Psoas muscle (tissue), 8 donors: ENCODE measurements at regions of chr11 and their contacts with region 1.

Region 1: DNA sequence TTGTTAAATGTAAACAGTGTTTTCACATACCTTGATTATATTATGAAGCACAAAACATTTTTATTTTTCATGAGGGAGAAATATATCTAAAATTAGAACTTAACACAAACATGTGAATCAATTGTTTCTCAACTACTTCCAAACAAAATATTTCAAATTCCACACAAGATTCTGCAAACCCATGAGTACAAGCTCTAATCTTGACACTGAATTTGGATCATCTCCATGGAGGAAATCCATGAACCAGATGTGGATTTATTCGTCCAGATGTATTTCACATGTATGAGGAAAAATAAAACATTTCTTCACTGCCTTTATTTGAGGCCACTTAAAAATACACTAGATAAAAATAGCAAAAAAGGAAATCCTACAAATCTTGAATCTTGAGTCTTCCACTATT is 184.2 kb downstream of the SBF2 start:
- DNase-seq: no peak
- ATAC-seq: peak in 1 of 4 donors; percentile 50
- H3K4me3 ChIP-seq: no peak overlapping the region
- H3K27ac ChIP-seq: peak overlapping the region; percentile 50
- H3K4me1 ChIP-seq: peaks cover 19% of the 10 kb centered on the region
- H3K27me3 ChIP-seq: no peaks in the 10 kb centered on the region
- CTCF ChIP-seq: no peak

Region 2: DNA sequence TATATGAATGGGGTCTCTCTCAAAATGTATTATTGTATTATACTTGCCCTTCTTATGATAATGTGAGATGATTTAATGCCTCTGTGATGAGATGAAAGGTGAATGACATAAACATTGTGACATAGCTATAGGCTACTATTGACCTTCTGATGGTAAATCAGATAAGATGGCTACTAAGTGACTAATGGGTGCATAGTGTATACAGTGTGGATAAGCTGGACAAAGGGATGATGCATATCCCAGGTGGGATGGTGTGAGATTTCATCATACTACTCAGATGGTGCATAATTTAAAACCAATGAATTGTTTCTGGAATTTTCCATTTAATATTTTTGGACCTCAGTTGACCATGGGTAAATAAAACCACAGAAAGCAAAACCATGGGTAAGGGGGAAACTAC is 59.3 kb before region 1 on chr11:
- intact Hi-C with region 1: loop called in 1 of 2 experiments (anchors 10 kb)
- DNase-seq: no peak
- ATAC-seq: no peak
- H3K4me3 ChIP-seq: no peak overlapping the region
- H3K27ac ChIP-seq: no peak overlapping the region
- H3K4me1 ChIP-seq: no peaks in the 10 kb centered on the region
- H3K27me3 ChIP-seq: no peaks in the 10 kb centered on the region
- CTCF ChIP-seq: no peak

Region 3: DNA sequence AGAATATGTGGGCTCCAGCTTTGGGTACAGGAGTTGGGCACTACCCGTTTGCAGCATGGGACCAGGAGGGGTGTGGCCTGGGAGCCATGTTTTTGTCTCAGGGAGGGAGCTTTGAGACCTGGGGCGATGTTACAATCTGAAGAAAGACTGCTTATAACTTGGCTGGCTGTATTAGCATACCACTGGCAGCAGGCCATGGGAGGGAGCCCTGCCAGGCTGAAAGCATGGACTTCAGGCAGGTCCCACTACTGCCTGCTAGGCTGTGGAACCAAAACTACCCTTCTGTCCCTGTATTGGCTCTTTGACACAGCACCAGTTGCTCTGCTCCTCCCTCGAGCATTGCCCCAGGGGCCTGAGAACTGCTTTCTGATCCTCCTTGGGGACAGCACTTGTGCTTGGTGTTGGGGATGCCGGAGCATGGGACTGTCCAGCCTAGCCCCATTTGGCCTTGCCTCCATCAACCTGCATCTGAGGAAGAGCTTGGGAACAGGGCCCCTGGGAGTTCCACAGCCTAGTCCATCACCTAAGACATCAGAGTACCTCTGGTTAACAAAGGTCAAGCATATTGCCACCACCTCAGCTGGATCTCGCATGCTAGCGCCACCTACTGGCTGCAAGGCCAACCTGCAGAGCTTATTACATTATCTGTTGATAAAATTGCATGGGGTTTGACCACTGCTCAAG is 33.2 kb before region 1 on chr11:
- intact Hi-C with region 1: no loop called
- DNase-seq: peak; percentile 48 to 60
- ATAC-seq: peak in 2 of 4 donors; percentile 33 to 48
- H3K4me3 ChIP-seq: no peak overlapping the region
- H3K27ac ChIP-seq: no peak overlapping the region
- H3K4me1 ChIP-seq: no peaks in the 10 kb centered on the region
- H3K27me3 ChIP-seq: no peaks in the 10 kb centered on the region
- CTCF ChIP-seq: peak; percentile 38